Ascending aorta (tissue), 2 donors: ENCODE measurements at regions of chr16 and their contacts with region 1.

Region 1: DNA sequence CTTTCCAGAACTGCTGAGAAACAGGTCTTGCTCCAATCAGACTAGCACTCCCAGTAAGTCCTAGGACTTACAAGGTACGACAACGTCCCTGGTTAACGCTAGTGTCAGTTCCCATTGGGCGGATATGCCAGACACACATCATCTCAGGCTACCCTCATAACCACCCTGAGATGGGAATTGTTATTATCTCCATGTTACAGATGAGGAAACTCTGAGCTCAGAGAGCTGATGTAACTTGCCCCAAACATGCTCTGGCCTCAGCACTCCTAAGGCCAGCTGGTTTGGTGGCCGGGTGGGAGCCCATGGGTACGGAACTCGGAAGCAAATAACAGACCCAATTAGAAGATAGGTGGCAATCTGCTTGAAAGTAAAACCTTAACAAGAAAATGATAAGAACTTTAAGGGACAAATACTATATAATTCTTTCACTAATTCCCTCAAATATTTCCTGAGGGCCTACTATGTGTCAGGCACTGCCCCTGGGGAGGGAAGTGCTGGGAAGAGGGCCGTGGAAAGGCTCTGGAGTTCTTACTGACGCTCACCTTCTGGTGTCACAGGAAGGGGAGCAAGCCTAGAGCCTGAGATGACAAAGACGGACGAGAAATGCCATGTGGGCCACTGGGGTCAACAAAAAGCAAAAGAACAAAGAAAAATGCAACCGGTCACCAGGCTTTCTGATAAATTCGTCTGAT is 6.9 kb downstream of the CREBBP start:
- DNase-seq: no peak
- H3K4me3 ChIP-seq: peak overlapping the region in 1 of 2 donors; percentile 6
- H3K27ac ChIP-seq: peak overlapping the region; percentile 57 to 61
- H3K4me1 ChIP-seq: peaks cover 25 to 79% of the 10 kb centered on the region in 2 donors
- H3K27me3 ChIP-seq: no peaks in the 10 kb centered on the region
- CTCF ChIP-seq: no peak

Region 2: DNA sequence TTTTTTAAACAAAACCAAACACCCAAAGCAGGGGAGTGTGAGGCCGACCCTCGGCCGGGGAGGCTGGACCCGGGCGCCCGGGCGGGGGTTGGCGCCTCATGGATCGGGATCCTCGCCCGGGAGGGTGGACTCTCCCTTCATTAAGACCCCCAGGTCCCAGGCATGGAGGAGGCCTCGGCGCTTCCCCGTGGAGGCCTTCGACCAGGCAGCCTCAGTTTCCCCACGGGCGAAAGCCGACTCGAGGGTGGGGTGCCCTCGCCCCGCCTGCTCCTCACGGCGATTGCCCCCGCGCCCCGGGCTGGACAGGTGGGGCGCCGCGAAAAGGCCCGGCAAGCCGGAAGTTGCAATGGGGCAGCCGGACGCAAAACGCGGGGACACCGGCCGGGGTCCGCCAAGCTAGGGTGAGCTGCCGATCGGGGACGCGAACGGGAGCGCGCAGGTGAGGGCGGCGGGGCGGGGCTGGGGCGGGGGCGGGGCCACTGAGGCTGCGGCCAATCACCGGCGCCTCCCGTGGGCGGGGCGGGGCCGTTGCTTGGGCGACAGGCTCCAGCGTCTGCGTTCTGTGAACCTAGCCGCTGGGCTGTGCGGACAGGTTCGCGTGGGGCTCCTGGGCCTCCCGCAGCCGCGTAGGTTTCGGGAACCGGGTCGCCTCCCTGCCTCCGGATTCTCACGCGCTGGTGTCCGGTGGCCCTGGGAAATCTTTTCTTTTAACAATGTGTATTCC is 767.3 kb before region 1 on chr16:
- intact Hi-C with region 1: no loop called
- DNase-seq: peak; percentile 63 to 96
- H3K4me3 ChIP-seq: peak overlapping the region; percentile 58 to 73
- H3K27ac ChIP-seq: peak overlapping the region; percentile 46 to 48
- H3K4me1 ChIP-seq: peaks cover 4 to 5% of the 10 kb centered on the region in 2 donors
- H3K27me3 ChIP-seq: no peaks in the 10 kb centered on the region
- CTCF ChIP-seq: no peak

Region 3: GRCh38 chr16:3793161-3793576 is 80.5 kb before region 1 on chr16:
- intact Hi-C with region 1: loop called (anchors 5 kb)
- DNase-seq: peak in 1 of 2 donors; percentile 77
- H3K4me3 ChIP-seq: peak overlapping the region in 1 of 2 donors; percentile 7
- H3K27ac ChIP-seq: peak overlapping the region; percentile 43 to 51
- H3K4me1 ChIP-seq: peaks cover 0 to 37% of the 10 kb centered on the region in 2 donors
- H3K27me3 ChIP-seq: no peaks in the 10 kb centered on the region
- CTCF ChIP-seq: peak; percentile 16 to 34 (median 26)

Region 4: DNA sequence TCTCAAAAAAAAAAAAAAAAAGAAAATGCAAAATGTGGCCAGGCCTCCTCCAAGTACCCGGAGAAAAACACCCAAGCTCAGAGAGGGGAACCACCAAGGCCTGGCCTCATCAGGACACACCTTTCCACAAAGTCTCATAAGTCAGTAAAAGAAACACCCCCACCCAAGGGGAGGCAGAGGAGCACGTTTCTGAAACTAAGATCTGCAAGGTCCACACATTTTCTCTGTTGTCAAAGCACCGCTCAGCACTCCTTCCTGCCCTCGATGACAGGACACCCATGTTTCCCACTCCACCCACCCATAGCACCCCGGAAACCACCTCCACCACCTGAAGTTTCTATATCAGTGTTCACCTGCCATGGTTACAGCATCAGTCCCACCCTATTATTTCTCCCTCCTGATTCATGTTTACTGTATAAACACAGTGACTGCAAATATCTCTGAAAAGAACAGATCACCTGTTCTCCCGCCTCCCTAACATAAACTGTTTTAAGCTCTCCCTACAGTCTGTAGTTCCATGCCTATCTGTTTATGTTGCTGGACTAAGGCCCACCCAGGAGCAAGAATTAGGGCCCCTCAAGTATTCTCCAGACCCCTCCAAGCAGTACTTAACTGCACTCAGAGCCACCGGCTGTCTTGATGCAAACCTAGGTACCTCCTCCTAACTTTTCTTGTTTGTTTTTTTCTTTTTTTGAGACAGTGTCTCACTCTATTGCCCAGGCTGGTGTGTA is 540.7 kb after region 1 on chr16:
- intact Hi-C with region 1: no loop called
- DNase-seq: no peak
- H3K4me3 ChIP-seq: peak overlapping the region in 1 of 2 donors; percentile 83
- H3K27ac ChIP-seq: no peak overlapping the region
- H3K4me1 ChIP-seq: peaks cover 0 to 9% of the 10 kb centered on the region in 2 donors
- H3K27me3 ChIP-seq: no peaks in the 10 kb centered on the region
- CTCF ChIP-seq: no peak